IMR-90 (cell line): ENCODE measurements at regions of chr9 and their contacts with region 1.

Region 1: GRCh38 chr9:12884737-12885414 is 110.1 kb downstream of the LURAP1L start:
- DNase-seq: peak; percentile 88
- ATAC-seq: peak; percentile 71
- H3K4me3 ChIP-seq: no peak overlapping the region
- H3K27ac ChIP-seq: no peak overlapping the region
- H3K4me1 ChIP-seq: peaks cover 7% of the 10 kb centered on the region
- H3K27me3 ChIP-seq: no peaks in the 10 kb centered on the region
- CTCF ChIP-seq: peak; percentile 79
- POLR2A ChIP-seq: no peak
- RAD21 ChIP-seq: peak; percentile 90

Region 2: GRCh38 chr9:12670006-12670405 is 214.9 kb before region 1 on chr9:
- CTCF ChIA-PET with region 1: no interaction called
- POLR2A ChIA-PET with region 1: no interaction called
- dilution Hi-C with region 1: no loop called
- in situ Hi-C with region 1: no loop called
- intact Hi-C with region 1: no loop called
- DNase-seq: no peak
- ATAC-seq: no peak
- H3K4me3 ChIP-seq: no peak overlapping the region
- H3K27ac ChIP-seq: no peak overlapping the region
- H3K4me1 ChIP-seq: no peaks in the 10 kb centered on the region
- H3K27me3 ChIP-seq: no peaks in the 10 kb centered on the region
- CTCF ChIP-seq: no peak
- POLR2A ChIP-seq: no peak
- RAD21 ChIP-seq: no peak

Region 3: GRCh38 chr9:12775679-12776512 is 109.0 kb before region 1 on chr9:
- CTCF ChIA-PET with region 1: interaction called, 6 read pairs
- POLR2A ChIA-PET with region 1: interaction called, 5 read pairs
- dilution Hi-C with region 1: no loop called
- in situ Hi-C with region 1: no loop called
- intact Hi-C with region 1: loop called (anchors 1 kb)
- DNase-seq: peak; percentile 89
- ATAC-seq: peak; percentile 84
- H3K4me3 ChIP-seq: peak overlapping the region; percentile 91
- H3K27ac ChIP-seq: peak overlapping the region; percentile 96
- H3K4me1 ChIP-seq: peaks cover 5% of the 10 kb centered on the region
- H3K27me3 ChIP-seq: no peaks in the 10 kb centered on the region
- CTCF ChIP-seq: peak; percentile 53
- POLR2A ChIP-seq: peak; percentile 45; the same call in 1 of the 2 replicates
- RAD21 ChIP-seq: peak; percentile 64; the same call in 1 of the 2 replicates

Region 4: DNA sequence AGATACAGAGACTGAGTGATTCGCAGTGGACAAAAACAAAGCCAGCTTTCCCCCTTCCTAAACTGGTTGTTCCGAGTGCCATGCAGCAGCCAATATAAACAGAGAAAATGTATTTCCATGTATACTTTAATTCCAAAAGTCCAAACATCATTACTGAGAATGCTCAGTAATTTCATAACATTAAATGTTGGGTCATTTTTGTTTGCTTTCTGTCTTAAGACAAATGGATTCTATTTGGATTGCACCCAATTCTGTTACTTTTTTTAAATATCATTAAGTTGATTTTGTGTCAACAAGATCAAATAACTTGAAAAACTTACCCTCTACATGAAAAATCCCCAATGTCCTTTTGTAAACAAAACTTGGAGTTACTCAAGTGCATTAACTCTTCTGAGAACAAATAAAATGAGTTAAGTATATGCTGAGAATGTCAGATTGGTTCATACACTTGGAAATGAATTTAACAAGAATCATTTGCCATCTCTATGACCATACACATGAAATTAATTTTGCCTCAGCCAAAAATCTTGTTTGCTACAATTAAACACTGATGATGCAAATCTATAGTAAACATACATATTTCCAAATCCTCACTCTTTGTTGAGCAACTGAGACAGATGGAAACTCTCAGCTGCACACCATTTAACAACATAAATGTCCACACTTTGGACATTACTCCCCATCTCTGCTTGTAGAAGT is 90.6 kb before region 1 on chr9:
- CTCF ChIA-PET with region 1: no interaction called
- POLR2A ChIA-PET with region 1: no interaction called
- dilution Hi-C with region 1: no loop called
- in situ Hi-C with region 1: no loop called
- intact Hi-C with region 1: loop called (anchors 5 kb)
- DNase-seq: peak; percentile 61
- ATAC-seq: peak; percentile 65
- H3K4me3 ChIP-seq: no peak overlapping the region
- H3K27ac ChIP-seq: peak overlapping the region; percentile 84; the same call in 1 of the 2 replicates
- H3K4me1 ChIP-seq: 0 out of 2 replicates have a peak, but pooled peaks cover 6% of the 10 kb centered on the region
- H3K27me3 ChIP-seq: no peaks in the 10 kb centered on the region
- CTCF ChIP-seq: no peak
- POLR2A ChIP-seq: no peak
- RAD21 ChIP-seq: no peak

Region 5: DNA sequence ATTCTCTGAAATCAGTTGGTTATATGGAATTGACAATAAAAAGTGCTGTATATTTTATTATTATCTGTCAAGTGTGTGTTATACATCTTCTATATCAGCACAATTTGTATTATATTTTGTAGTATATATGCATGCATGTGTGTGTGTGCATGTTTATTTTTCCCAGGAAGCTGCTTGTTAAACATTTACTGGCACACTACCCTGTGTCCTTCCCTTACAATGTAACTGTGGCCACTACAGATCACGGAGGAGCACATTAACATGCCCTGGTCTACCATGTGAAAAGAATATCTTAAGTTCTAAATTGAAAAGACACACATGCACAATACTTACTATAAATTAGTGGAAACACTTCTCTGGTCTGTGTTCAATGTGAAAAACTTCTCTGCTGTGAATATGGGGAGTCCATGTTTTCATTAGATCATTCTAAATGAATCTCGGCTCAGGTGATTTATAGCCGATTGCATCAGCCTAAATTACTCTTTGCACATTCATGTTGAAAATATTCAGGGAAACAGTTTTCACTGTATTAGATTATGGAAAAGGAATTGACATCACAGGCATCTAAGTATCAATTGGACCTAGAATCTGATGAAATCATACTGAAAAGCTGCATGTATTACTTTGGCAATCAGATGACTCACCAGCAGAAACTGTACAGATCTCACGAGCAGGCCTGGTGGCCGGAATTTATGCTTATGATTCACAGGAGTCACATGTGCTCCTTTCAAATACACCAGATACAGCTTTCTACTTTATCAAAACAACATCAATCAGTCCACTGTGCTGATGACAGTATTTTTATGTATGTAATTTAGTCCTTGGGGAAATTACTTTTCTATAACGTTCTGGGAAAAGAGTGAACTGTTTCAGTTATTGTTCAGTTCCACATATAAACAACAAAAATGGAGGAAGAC is 70.7 kb before region 1 on chr9:
- CTCF ChIA-PET with region 1: interaction called, 3 read pairs
- POLR2A ChIA-PET with region 1: interaction called, 3 read pairs
- dilution Hi-C with region 1: no loop called
- in situ Hi-C with region 1: no loop called
- intact Hi-C with region 1: loop called (anchors 1 kb)
- DNase-seq: peak; percentile 100
- ATAC-seq: peak; percentile 79
- H3K4me3 ChIP-seq: peak overlapping the region; percentile 19; the same call in 1 of the 2 replicates
- H3K27ac ChIP-seq: peak overlapping the region; percentile 97
- H3K4me1 ChIP-seq: peaks cover 20% of the 10 kb centered on the region
- H3K27me3 ChIP-seq: no peaks in the 10 kb centered on the region
- CTCF ChIP-seq: peak; percentile 50
- POLR2A ChIP-seq: peak; percentile 52; the same call in 1 of the 2 replicates
- RAD21 ChIP-seq: no peak

Region 6: GRCh38 chr9:13088720-13089427 is 204.0 kb after region 1 on chr9:
- CTCF ChIA-PET with region 1: no interaction called
- POLR2A ChIA-PET with region 1: no interaction called
- dilution Hi-C with region 1: no loop called
- in situ Hi-C with region 1: no loop called
- intact Hi-C with region 1: loop called (anchors 5 kb)
- DNase-seq: peak; percentile 57
- ATAC-seq: peak; percentile 85
- H3K4me3 ChIP-seq: peak overlapping the region; percentile 38; the same call in 1 of the 2 replicates
- H3K27ac ChIP-seq: no peak overlapping the region
- H3K4me1 ChIP-seq: no peaks in the 10 kb centered on the region
- H3K27me3 ChIP-seq: no peaks in the 10 kb centered on the region
- CTCF ChIP-seq: peak; percentile 67
- POLR2A ChIP-seq: no peak
- RAD21 ChIP-seq: peak; percentile 66